MCF 10A (cell line): ENCODE measurements at regions of chr14 and their contacts with region 1.

Region 1: GRCh38 chr14:49862089-49862673 is 9.6 kb upstream of the NEMF start:
- DNase-seq: peak; percentile 81
- H3K4me3 Mint-ChIP-seq: no peak overlapping the region
- H3K27ac Mint-ChIP-seq: no peak overlapping the region
- H3K4me1 Mint-ChIP-seq: no peaks in the 10 kb centered on the region
- H3K27me3 Mint-ChIP-seq: no peaks in the 10 kb centered on the region
- CTCF ChIP-seq: peak; percentile 100

Region 2: DNA sequence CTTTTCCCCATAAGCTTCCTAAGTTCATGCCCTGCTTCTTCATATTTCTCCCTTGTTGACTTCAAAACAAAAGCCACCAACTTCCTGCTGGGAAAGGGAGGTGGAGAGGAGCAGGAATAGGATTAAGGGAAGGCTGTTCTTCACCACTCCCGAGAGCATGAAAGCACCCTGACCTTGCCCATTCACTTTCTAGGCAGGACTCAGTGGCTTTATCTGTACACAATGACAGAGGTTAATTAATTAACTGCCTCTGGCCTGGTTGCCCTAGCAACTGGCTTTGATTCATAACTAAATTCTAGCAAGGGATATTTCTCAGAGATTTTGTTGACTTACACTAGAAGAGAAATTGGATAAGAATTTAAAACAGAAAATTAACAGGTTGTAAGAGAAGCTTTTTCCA is 672.8 kb before region 1 on chr14:
- CTCF ChIA-PET with region 1: no interaction called
- POLR2A ChIA-PET with region 1: no interaction called
- intact Hi-C with region 1: no loop called
- DNase-seq: no peak
- H3K4me3 Mint-ChIP-seq: no peak overlapping the region
- H3K27ac Mint-ChIP-seq: no peak overlapping the region
- H3K4me1 Mint-ChIP-seq: no peaks in the 10 kb centered on the region
- H3K27me3 Mint-ChIP-seq: no peaks in the 10 kb centered on the region
- CTCF ChIP-seq: no peak

Region 3: GRCh38 chr14:49633640-49634546 is 228.3 kb before region 1 on chr14:
- CTCF ChIA-PET with region 1: interaction called, 4 read pairs
- POLR2A ChIA-PET with region 1: interaction called, 11 read pairs
- intact Hi-C with region 1: no loop called
- DNase-seq: peak; percentile 92
- H3K4me3 Mint-ChIP-seq: peak overlapping the region; percentile 95
- H3K27ac Mint-ChIP-seq: peak overlapping the region; percentile 99
- H3K4me1 Mint-ChIP-seq: peaks cover 14% of the 10 kb centered on the region
- H3K27me3 Mint-ChIP-seq: no peaks in the 10 kb centered on the region
- CTCF ChIP-seq: peak; percentile 83

Region 4: GRCh38 chr14:49971156-49972130 is 109.3 kb after region 1 on chr14:
- CTCF ChIA-PET with region 1: interaction called, 11 read pairs
- POLR2A ChIA-PET with region 1: interaction called, 28 read pairs
- intact Hi-C with region 1: no loop called
- DNase-seq: peak; percentile 80
- H3K4me3 Mint-ChIP-seq: peak overlapping the region; percentile 58
- H3K27ac Mint-ChIP-seq: peak overlapping the region; percentile 89
- H3K4me1 Mint-ChIP-seq: peaks cover 48% of the 10 kb centered on the region
- H3K27me3 Mint-ChIP-seq: no peaks in the 10 kb centered on the region
- CTCF ChIP-seq: no peak

Region 5: GRCh38 chr14:50008562-50009350 is 146.6 kb after region 1 on chr14:
- CTCF ChIA-PET with region 1: interaction called, 33 read pairs
- POLR2A ChIA-PET with region 1: interaction called, 176 read pairs
- intact Hi-C with region 1: no loop called
- DNase-seq: peak; percentile 96
- H3K4me3 Mint-ChIP-seq: peak overlapping the region; percentile 69
- H3K27ac Mint-ChIP-seq: peak overlapping the region; percentile 96
- H3K4me1 Mint-ChIP-seq: peaks cover 29% of the 10 kb centered on the region
- H3K27me3 Mint-ChIP-seq: no peaks in the 10 kb centered on the region
- CTCF ChIP-seq: no peak

Region 6: GRCh38 chr14:50060871-50061663 is 198.9 kb after region 1 on chr14:
- CTCF ChIA-PET with region 1: interaction called, 52 read pairs
- POLR2A ChIA-PET with region 1: interaction called, 31 read pairs
- intact Hi-C with region 1: loop called (anchors 5 kb)
- DNase-seq: peak; percentile 96
- H3K4me3 Mint-ChIP-seq: no peak overlapping the region
- H3K27ac Mint-ChIP-seq: peak overlapping the region; percentile 84
- H3K4me1 Mint-ChIP-seq: peaks cover 20% of the 10 kb centered on the region
- H3K27me3 Mint-ChIP-seq: no peaks in the 10 kb centered on the region
- CTCF ChIP-seq: no peak

Region 7: DNA sequence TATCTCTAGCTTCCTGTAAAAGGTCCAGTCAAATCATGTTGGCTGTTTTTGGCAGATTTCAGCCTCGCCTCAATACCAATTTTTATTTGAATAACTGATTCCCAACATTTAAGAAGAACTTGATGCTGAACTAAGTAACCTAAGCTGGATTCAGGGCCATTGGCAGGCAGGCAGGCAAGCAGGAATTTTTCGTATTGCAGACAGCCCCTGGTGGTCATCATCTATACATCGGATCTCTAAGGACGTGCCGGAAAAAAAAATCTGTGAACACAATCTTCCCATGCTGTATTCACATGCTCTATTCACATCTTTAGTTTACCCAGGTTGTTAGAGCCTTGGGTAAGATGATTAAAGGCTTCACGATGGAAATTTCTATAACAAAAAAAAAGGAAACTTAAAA is 247.2 kb after region 1 on chr14:
- CTCF ChIA-PET with region 1: interaction called, 178 read pairs
- POLR2A ChIA-PET with region 1: interaction called, 47 read pairs
- intact Hi-C with region 1: loop called (anchors 1 kb)
- DNase-seq: no peak
- H3K4me3 Mint-ChIP-seq: no peak overlapping the region
- H3K27ac Mint-ChIP-seq: no peak overlapping the region
- H3K4me1 Mint-ChIP-seq: no peaks in the 10 kb centered on the region
- H3K27me3 Mint-ChIP-seq: no peaks in the 10 kb centered on the region
- CTCF ChIP-seq: peak; percentile 14

Region 8: GRCh38 chr14:50489489-50490250 is 627.5 kb after region 1 on chr14:
- CTCF ChIA-PET with region 1: no interaction called
- POLR2A ChIA-PET with region 1: no interaction called
- intact Hi-C with region 1: no loop called
- DNase-seq: no peak
- H3K4me3 Mint-ChIP-seq: no peak overlapping the region
- H3K27ac Mint-ChIP-seq: no peak overlapping the region
- H3K4me1 Mint-ChIP-seq: no peaks in the 10 kb centered on the region
- H3K27me3 Mint-ChIP-seq: no peaks in the 10 kb centered on the region
- CTCF ChIP-seq: no peak